Caco-2 (cell line): ENCODE measurements at regions of chr6 and their contacts with region 1.

Region 1: GRCh38 chr6:8166156-8166555 is 63.8 kb upstream of the EEF1E1 start:
- DNase-seq: peak; percentile 65 to 69
- H3K4me3 ChIP-seq: no peak overlapping the region
- H3K4me3 Mint-ChIP-seq: peak overlapping the region; percentile 45
- H3K27ac Mint-ChIP-seq: peak overlapping the region; percentile 76
- H3K4me1 ChIP-seq: peaks cover 51% of the 10 kb centered on the region
- H3K4me1 Mint-ChIP-seq: peaks cover 24% of the 10 kb centered on the region
- H3K27me3 ChIP-seq: no peaks in the 10 kb centered on the region
- H3K27me3 Mint-ChIP-seq: no peaks in the 10 kb centered on the region
- CTCF ChIP-seq: no peak

Region 2: GRCh38 chr6:8180327-8181159 is 14.4 kb after region 1 on chr6:
- CTCF ChIA-PET with region 1: no interaction called
- POLR2A ChIA-PET with region 1: no interaction called
- intact Hi-C with region 1: loop called (anchors 2 kb)
- DNase-seq: peak; percentile 44 to 50
- H3K4me3 ChIP-seq: no peak overlapping the region
- H3K4me3 Mint-ChIP-seq: no peak overlapping the region
- H3K27ac Mint-ChIP-seq: peak overlapping the region; percentile 51
- H3K4me1 ChIP-seq: peaks cover 42% of the 10 kb centered on the region
- H3K4me1 Mint-ChIP-seq: peaks cover 47% of the 10 kb centered on the region
- H3K27me3 ChIP-seq: no peaks in the 10 kb centered on the region
- H3K27me3 Mint-ChIP-seq: no peaks in the 10 kb centered on the region
- CTCF ChIP-seq: no peak

Region 3: DNA sequence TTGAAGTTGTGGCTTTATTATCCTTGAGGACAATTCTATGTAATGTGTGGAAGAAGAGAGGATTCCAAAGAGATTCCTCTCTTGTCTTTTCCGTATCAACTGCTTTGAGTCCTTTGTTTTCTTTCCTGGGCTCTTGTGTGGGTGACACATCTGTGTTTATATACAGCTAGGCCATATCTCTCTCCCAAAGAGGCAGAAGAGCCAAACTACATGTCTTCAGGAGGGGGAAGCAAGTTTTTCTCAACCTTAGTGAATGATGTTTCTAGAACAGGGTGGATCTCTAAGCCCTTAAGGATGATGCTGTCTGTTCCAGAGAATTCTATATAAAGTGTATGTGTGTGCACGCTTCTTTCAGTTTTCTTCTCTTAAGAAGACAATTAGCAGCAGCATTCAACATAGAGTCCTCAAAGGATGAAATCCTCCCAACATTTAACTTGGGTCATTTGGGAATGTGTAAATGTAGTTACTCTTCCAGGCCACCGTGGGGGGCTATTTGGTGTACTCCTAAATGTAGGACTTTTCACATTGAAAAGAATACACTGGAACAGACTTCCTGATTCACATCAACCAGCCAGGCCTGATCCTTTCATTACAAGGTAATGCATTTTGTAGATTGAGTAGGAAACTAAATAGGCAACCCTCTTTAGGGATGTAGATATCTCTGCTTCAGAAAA is 29.0 kb after region 1 on chr6:
- CTCF ChIA-PET with region 1: no interaction called
- POLR2A ChIA-PET with region 1: no interaction called
- intact Hi-C with region 1: loop called (anchors 2 kb)
- DNase-seq: peak; percentile 52 to 63
- H3K4me3 ChIP-seq: no peak overlapping the region
- H3K4me3 Mint-ChIP-seq: peak overlapping the region; percentile 47
- H3K27ac Mint-ChIP-seq: peak overlapping the region; percentile 45
- H3K4me1 ChIP-seq: peaks cover 55% of the 10 kb centered on the region
- H3K4me1 Mint-ChIP-seq: peaks cover 42% of the 10 kb centered on the region
- H3K27me3 ChIP-seq: no peaks in the 10 kb centered on the region
- H3K27me3 Mint-ChIP-seq: no peaks in the 10 kb centered on the region
- CTCF ChIP-seq: peak; percentile 41 to 57

Region 4: GRCh38 chr6:8219352-8219943 is 53.3 kb after region 1 on chr6:
- CTCF ChIA-PET with region 1: interaction called, 4 read pairs
- POLR2A ChIA-PET with region 1: interaction called, 9 read pairs
- intact Hi-C with region 1: loop called (anchors 2 kb)
- DNase-seq: peak in 1 of 2 experiments; percentile 52
- H3K4me3 ChIP-seq: no peak overlapping the region
- H3K4me3 Mint-ChIP-seq: no peak overlapping the region
- H3K27ac Mint-ChIP-seq: no peak overlapping the region
- H3K4me1 ChIP-seq: peaks cover 18% of the 10 kb centered on the region
- H3K4me1 Mint-ChIP-seq: peaks cover 14% of the 10 kb centered on the region
- H3K27me3 ChIP-seq: no peaks in the 10 kb centered on the region
- H3K27me3 Mint-ChIP-seq: no peaks in the 10 kb centered on the region
- CTCF ChIP-seq: peak; percentile 50 to 71